Mammary epithelial cell (primary cell): ENCODE measurements at regions of chr14 and their contacts with region 1.

Region 1: DNA sequence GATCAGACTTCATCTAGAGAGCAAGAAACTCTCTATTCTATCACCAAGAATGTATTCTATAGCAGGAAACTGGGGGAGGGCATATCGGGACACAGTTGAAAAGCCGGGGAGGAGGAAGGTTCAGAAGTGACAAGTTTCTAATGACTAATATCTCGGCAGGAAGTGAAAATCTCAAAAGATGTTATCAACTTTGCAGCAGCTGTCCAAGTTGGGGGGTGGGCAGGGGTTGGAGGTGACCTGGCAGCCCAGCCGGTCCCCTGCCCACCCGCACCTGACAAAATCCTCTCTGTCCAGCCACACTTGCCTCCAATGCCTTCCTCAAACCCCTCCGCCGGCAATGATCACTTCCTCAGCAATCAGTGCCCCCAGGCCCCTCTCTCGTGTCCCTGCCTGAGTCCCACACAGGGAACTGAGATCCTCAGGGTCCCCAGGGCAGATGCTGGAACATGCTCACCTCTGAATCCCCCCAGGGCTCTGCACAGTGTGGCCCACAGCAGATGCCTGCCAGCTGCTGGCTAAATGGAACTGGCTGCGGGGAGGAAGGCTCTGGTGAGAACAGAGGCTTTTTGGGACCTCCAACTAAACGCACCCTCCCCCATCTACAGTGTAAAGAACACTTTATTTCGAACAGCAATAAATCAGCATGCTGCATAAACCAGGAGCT is 43.9 kb downstream of the CCDC88C start:
- DNase-seq: no peak
- H3K4me3 ChIP-seq: no peak overlapping the region
- H3K27ac ChIP-seq: no peak overlapping the region
- H3K4me1 ChIP-seq: peaks cover 12% of the 10 kb centered on the region
- H3K27me3 ChIP-seq: no peaks in the 10 kb centered on the region
- CTCF ChIP-seq: no peak

Region 2: GRCh38 chr14:91305650-91306431 is 67.9 kb before region 1 on chr14:
- CTCF ChIA-PET with region 1: no interaction called
- dilution Hi-C with region 1: loop called (anchors 5 kb)
- in situ Hi-C with region 1: no loop called
- intact Hi-C with region 1: no loop called
- DNase-seq: no peak
- H3K4me3 ChIP-seq: no peak overlapping the region
- H3K27ac ChIP-seq: no peak overlapping the region
- H3K4me1 ChIP-seq: no peaks in the 10 kb centered on the region
- H3K27me3 ChIP-seq: no peaks in the 10 kb centered on the region
- CTCF ChIP-seq: no peak

Region 3: GRCh38 chr14:91439345-91439744 is 65.6 kb after region 1 on chr14:
- CTCF ChIA-PET with region 1: no interaction called
- dilution Hi-C with region 1: loop called (anchors 5 kb)
- in situ Hi-C with region 1: no loop called
- intact Hi-C with region 1: no loop called
- DNase-seq: no peak
- H3K4me3 ChIP-seq: no peak overlapping the region
- H3K27ac ChIP-seq: no peak overlapping the region
- H3K4me1 ChIP-seq: no peaks in the 10 kb centered on the region
- H3K27me3 ChIP-seq: peaks cover 2% of the 10 kb centered on the region
- CTCF ChIP-seq: no peak

Region 4: DNA sequence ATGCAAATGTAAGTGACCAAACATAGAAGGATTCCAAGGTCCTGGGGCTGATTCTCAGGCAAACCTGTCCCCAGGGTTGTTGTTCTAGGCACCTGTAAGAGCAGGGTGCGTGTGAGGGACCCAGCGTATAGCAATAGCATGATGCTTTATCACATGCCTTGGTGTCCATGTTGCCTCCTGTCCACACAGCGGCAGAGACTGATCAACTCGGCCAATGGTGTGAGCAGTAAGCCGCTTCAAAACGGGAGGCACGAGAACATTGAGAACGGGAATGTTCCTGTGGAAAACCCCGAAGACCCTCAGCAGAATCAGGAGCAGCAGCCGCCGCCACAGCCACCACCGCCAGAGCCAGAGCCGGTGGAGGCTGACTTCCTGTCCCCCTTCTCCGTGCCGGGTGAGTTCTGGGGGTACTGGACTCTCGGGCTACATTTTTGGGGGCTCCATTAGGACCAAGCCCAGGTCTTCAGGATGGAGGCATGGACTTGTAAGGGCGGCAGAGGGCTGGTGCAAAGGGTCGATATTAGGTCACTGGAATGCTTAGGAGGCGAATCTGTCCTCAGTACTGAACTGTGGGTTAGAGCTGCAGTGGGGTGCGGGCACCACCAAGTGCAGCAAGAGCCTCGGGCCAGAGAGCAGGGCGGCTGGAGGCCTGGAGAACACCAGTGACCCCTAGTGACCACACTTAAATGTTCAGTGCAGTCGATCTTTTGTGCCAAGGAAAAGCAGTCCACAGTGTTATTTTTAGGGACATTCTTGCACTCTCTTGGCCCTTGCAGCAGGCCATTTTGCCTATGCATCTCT is 1082.7 kb after region 1 on chr14:
- CTCF ChIA-PET with region 1: no interaction called
- dilution Hi-C with region 1: no loop called
- in situ Hi-C with region 1: no loop called
- intact Hi-C with region 1: no loop called
- DNase-seq: peak; percentile 25
- H3K4me3 ChIP-seq: no peak overlapping the region
- H3K27ac ChIP-seq: no peak overlapping the region
- H3K4me1 ChIP-seq: no peaks in the 10 kb centered on the region
- H3K27me3 ChIP-seq: no peaks in the 10 kb centered on the region
- CTCF ChIP-seq: peak; percentile 38 to 49